Naive thymus-derived CD4-positive, alpha-beta T cell (primary cell): ENCODE measurements at regions of chr3 and their contacts with region 1.

Region 1: GRCh38 chr3:115814778-115815380 is 191.6 kb downstream of the GAP43 start:
- DNase-seq: peak; percentile 21 to 65 (median 46)
- ATAC-seq: peak; percentile 61
- H3K4me3 ChIP-seq: no peak overlapping the region
- H3K4me3 Mint-ChIP-seq: no peak overlapping the region
- H3K27ac ChIP-seq: no peak overlapping the region
- H3K27ac Mint-ChIP-seq: peak overlapping the region in 1 of 9 donors; percentile 69
- H3K4me1 ChIP-seq: no peaks in the 10 kb centered on the region
- H3K4me1 Mint-ChIP-seq: peaks cover 0 to 5% (median 0%) of the 10 kb centered on the region in 7 donors
- H3K27me3 ChIP-seq: no peaks in the 10 kb centered on the region
- H3K27me3 Mint-ChIP-seq: peaks cover 0 to 31% (median 12%) of the 10 kb centered on the region in 5 donors

Region 2: GRCh38 chr3:114383875-114384557 is 1430.9 kb before region 1 on chr3:
- CTCF ChIA-PET with region 1: interaction called, 5 read pairs
- POLR2A ChIA-PET with region 1: no interaction called
- intact Hi-C with region 1: loop called in 1 of 2 experiments (anchors 2 kb)
- DNase-seq: peak; percentile 7 to 58 (median 37)
- ATAC-seq: peak; percentile 96
- H3K4me3 ChIP-seq: peak overlapping the region; percentile 57
- H3K4me3 Mint-ChIP-seq: peak overlapping the region in 8 of 10 donors; percentile 60 to 88 (median 77)
- H3K27ac ChIP-seq: no peak overlapping the region
- H3K27ac Mint-ChIP-seq: peak overlapping the region in 5 of 9 donors; percentile 27 to 73 (median 56)
- H3K4me1 ChIP-seq: peaks cover 0 to 7% of the 10 kb centered on the region in 2 donors
- H3K4me1 Mint-ChIP-seq: peaks cover 0 to 23% (median 12%) of the 10 kb centered on the region in 7 donors
- H3K27me3 ChIP-seq: no peaks in the 10 kb centered on the region
- H3K27me3 Mint-ChIP-seq: no peaks in the 10 kb centered on the region

Region 3: DNA sequence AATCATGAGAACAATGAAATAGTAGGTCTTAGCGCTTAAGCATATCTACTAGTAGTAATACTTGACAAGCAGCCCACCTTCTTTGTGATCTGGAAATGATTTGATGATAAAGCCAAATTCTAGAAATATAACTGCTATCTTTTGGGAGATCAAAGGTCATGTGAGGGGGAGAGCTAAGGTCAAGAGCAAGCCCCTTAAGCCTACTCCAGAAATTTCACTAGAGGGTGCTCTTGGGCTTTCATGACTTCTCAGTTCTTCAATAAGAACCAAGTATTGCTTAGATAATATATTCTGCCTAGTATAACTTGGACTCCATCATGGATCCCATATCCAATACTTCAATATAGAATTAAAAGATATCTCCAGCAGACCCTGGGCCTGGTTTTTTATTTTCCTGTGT is 987.4 kb before region 1 on chr3:
- CTCF ChIA-PET with region 1: no interaction called
- POLR2A ChIA-PET with region 1: no interaction called
- intact Hi-C with region 1: loop called (anchors 2 to 5 kb)
- DNase-seq: peak in 2 of 9 donors; percentile 11 to 18
- ATAC-seq: peak; percentile 50
- H3K4me3 ChIP-seq: no peak overlapping the region
- H3K4me3 Mint-ChIP-seq: no peak overlapping the region
- H3K27ac ChIP-seq: no peak overlapping the region
- H3K27ac Mint-ChIP-seq: no peak overlapping the region
- H3K4me1 ChIP-seq: no peaks in the 10 kb centered on the region
- H3K4me1 Mint-ChIP-seq: peaks cover 0 to 11% (median 4%) of the 10 kb centered on the region in 7 donors
- H3K27me3 ChIP-seq: no peaks in the 10 kb centered on the region
- H3K27me3 Mint-ChIP-seq: no peaks in the 10 kb centered on the region

Region 4: DNA sequence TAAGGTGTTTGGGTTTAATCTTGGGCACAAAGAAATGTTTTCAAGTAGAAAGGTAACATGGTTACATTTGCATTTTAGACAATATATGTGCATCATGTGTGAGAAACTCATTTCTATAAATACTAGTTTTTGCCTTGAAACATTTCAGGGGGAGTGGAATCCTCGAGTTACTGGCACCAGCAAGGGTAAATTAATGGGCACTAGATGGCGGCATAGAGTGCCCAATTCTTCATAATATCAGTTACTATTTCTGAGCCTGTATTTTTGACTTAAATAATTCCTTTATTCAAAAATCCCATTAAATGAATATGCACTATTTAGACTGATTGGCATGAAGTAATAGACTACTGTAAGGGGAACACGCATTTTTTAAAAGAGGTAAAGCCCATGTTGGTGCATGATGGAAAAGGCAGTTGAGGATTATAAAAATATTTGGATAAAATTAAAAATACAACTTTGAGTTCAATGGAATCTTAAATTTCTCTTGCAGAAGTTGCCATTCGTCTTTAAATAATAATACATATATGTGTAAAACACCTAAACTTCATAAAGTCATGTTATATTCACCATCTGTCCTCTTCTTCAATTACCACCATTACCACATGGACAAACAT is 774.1 kb before region 1 on chr3:
- CTCF ChIA-PET with region 1: no interaction called
- POLR2A ChIA-PET with region 1: no interaction called
- intact Hi-C with region 1: loop called (anchors 1 to 2 kb)
- DNase-seq: peak in 7 of 9 donors; percentile 15 to 48 (median 30)
- ATAC-seq: peak; percentile 66
- H3K4me3 ChIP-seq: no peak overlapping the region
- H3K4me3 Mint-ChIP-seq: no peak overlapping the region
- H3K27ac ChIP-seq: no peak overlapping the region
- H3K27ac Mint-ChIP-seq: peak overlapping the region in 2 of 9 donors; percentile 3 to 51
- H3K4me1 ChIP-seq: no peaks in the 10 kb centered on the region
- H3K4me1 Mint-ChIP-seq: peaks cover 0 to 35% (median 16%) of the 10 kb centered on the region in 7 donors
- H3K27me3 ChIP-seq: no peaks in the 10 kb centered on the region
- H3K27me3 Mint-ChIP-seq: no peaks in the 10 kb centered on the region

Region 5: GRCh38 chr3:115092220-115092791 is 722.6 kb before region 1 on chr3:
- CTCF ChIA-PET with region 1: no interaction called
- POLR2A ChIA-PET with region 1: no interaction called
- intact Hi-C with region 1: loop called (anchors 2 to 5 kb)
- DNase-seq: peak; percentile 24 to 62 (median 44)
- ATAC-seq: peak; percentile 76
- H3K4me3 ChIP-seq: no peak overlapping the region
- H3K4me3 Mint-ChIP-seq: no peak overlapping the region
- H3K27ac ChIP-seq: no peak overlapping the region
- H3K27ac Mint-ChIP-seq: peak overlapping the region in 5 of 9 donors; percentile 6 to 46 (median 32)
- H3K4me1 ChIP-seq: peaks cover 0 to 9% of the 10 kb centered on the region in 2 donors
- H3K4me1 Mint-ChIP-seq: peaks cover 3 to 73% (median 44%) of the 10 kb centered on the region in 7 donors
- H3K27me3 ChIP-seq: no peaks in the 10 kb centered on the region
- H3K27me3 Mint-ChIP-seq: no peaks in the 10 kb centered on the region

Region 6: GRCh38 chr3:115217678-115218451 is 597.0 kb before region 1 on chr3:
- CTCF ChIA-PET with region 1: interaction called, 3 read pairs
- POLR2A ChIA-PET with region 1: no interaction called
- intact Hi-C with region 1: loop called (anchors 1 to 10 kb)
- DNase-seq: peak in 5 of 9 donors; percentile 1 to 19 (median 3)
- ATAC-seq: peak; percentile 52
- H3K4me3 ChIP-seq: no peak overlapping the region
- H3K4me3 Mint-ChIP-seq: no peak overlapping the region
- H3K27ac ChIP-seq: no peak overlapping the region
- H3K27ac Mint-ChIP-seq: no peak overlapping the region
- H3K4me1 ChIP-seq: no peaks in the 10 kb centered on the region
- H3K4me1 Mint-ChIP-seq: no peaks in the 10 kb centered on the region
- H3K27me3 ChIP-seq: no peaks in the 10 kb centered on the region
- H3K27me3 Mint-ChIP-seq: peaks cover 0 to 17% (median 4%) of the 10 kb centered on the region in 5 donors

Region 7: DNA sequence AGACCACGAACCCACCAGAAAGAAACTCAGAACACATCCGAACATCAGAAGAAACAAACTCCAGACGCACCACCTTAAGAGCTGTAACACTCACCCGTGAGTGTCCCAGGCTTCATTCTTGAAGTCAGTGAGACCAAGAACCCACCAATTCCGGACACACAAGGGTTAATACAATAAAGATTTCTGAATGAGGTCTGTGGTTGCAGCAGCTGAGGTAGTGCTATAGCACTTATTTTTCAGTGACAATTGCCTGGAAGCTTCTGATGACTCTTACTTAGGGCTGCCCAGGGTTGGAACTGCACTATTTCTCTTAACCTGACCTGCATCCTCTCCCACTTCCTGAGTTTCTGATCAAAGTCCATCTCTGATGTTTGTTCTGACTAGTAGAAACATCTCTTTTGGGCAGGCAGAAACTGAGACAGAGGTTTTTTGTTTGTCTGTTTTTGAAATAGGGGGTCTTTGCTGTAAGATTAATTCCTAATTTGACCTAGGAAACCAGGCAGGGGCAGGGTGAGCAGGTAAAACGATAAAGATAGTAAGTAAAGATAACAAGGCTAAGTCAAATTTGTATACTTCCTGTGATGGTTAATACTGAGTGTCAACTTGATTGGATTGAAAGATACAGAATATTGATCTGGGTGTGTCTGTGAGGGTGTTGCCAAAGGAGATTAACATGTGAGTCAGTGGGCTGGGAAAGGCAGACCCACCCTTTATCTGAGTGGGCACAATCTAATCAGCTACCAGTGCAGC is 22.5 kb before region 1 on chr3:
- CTCF ChIA-PET with region 1: interaction called, 7 read pairs
- POLR2A ChIA-PET with region 1: no interaction called
- intact Hi-C with region 1: loop called in 1 of 2 experiments (anchors 2 kb)
- DNase-seq: peak in 7 of 9 donors; percentile 52 to 65 (median 55)
- ATAC-seq: peak; percentile 92
- H3K4me3 ChIP-seq: no peak overlapping the region
- H3K4me3 Mint-ChIP-seq: peak overlapping the region; percentile 49 to 78 (median 66)
- H3K27ac ChIP-seq: no peak overlapping the region
- H3K27ac Mint-ChIP-seq: peak overlapping the region; percentile 26 to 84 (median 66)
- H3K4me1 ChIP-seq: peaks cover 7% of the 10 kb centered on the region in 2 donors
- H3K4me1 Mint-ChIP-seq: peaks cover 7 to 25% (median 16%) of the 10 kb centered on the region in 7 donors
- H3K27me3 ChIP-seq: no peaks in the 10 kb centered on the region
- H3K27me3 Mint-ChIP-seq: no peaks in the 10 kb centered on the region